Activated T-helper 2 cell treated with anti-CD3 and anti-CD28 coated beads, Interferon-gamma antibody, Interleukin-2, Interleukin-4, amounts not matched to agents 10 μg/mL and 5 μg/mL and 100 μg/mL, durations not matched to agents 14 hours and 24 hours and 36 hours (primary cell): ENCODE measurements at regions of chr3 and their contacts with region 1.

Region 1: GRCh38 chr3:180912304-180913296 is at the start of gene FXR1:
- DNase-seq: peak; percentile 79
- H3K4me3 Mint-ChIP-seq: peak within 1 kb of the TSS; percentile 99
- H3K27ac Mint-ChIP-seq: peak within 1 kb of the TSS; percentile 95
- H3K4me1 Mint-ChIP-seq: peaks cover 31% of the 10 kb centered on the region
- H3K27me3 Mint-ChIP-seq: no peaks in the 10 kb centered on the region
- total RNA-seq, gene FXR1: 163 and 170 TPM in 2 replicates

Region 2: GRCh38 chr3:180590396-180590795 is 322.2 kb before region 1 on chr3:
- intact Hi-C with region 1: no loop called
- DNase-seq: no peak
- H3K4me3 Mint-ChIP-seq: no peak overlapping the region
- H3K27ac Mint-ChIP-seq: no peak overlapping the region
- H3K4me1 Mint-ChIP-seq: peaks cover 1% of the 10 kb centered on the region
- H3K27me3 Mint-ChIP-seq: peaks cover 18% of the 10 kb centered on the region

Region 3: DNA sequence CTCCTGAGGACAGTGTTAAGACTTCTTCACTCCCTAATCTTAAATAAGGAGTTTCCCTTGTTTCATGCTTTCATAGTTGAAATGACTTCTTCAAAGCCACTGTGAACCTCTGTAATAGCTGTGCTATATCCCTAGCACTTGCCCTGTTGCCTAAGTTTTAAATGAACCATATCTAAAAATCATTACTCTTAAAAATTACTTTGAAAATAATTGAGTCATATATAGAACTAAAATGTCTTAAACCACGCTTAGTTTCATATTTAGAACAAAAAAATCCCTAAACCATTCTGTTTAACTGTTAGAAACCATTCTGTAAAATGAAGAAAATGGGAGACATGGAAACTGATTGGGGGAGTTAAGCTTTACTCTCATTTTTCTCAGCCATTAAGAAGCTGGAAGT is 47.1 kb after region 1 on chr3:
- intact Hi-C with region 1: loop called (anchors 5 kb)
- DNase-seq: no peak
- H3K4me3 Mint-ChIP-seq: no peak overlapping the region
- H3K27ac Mint-ChIP-seq: peak overlapping the region; percentile 64
- H3K4me1 Mint-ChIP-seq: peaks cover 10% of the 10 kb centered on the region
- H3K27me3 Mint-ChIP-seq: no peaks in the 10 kb centered on the region

Region 4: DNA sequence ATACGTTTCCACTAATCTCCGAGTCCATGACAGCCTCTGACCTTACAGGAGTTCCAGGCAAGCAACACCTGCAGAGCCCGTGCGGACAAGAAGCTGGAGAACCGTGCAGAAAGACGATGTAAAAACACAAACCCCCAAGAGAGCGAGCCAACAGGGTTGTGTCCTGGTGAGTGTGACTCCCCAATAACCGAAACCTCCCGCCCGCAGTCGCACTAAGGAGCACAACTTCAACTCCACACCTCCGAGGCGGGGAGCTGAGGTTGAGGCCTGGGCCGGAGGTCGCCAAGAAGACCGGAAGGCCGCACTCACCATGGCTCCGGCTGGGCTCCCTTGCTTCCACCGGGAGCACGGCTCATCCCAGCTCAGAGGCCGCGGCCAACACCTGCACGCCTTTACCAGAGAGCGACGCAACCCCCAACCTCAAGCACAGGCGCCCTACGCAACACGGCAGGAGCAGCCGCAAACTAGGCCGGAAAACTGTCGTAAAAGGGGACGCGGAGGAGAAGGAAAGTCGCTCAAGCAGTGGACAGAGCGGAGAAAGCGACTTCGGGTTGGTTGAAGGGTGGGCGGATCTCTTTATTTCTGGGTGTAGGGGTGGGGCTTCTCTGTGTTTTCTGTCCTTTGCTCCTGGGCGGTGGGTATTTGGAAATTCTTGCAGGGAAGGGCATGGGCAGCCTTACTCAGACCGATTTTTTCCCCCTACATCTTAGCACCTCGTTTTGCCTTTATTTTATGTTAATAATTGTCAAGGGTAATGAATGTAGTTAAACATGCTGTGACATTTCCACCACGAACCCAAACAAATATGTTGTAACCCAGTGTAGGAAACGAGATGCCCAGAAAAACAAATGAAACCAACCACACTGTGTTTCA is 76.9 kb after region 1 on chr3 and contains the start of gene DNAJC19:
- intact Hi-C with region 1: loop called (anchors 1 kb)
- DNase-seq: peak; percentile 88
- H3K4me3 Mint-ChIP-seq: peak within 1 kb of the TSS; percentile 100
- H3K27ac Mint-ChIP-seq: peak within 1 kb of the TSS; percentile 96
- H3K4me1 Mint-ChIP-seq: peaks cover 14% of the 10 kb centered on the region
- H3K27me3 Mint-ChIP-seq: peaks cover 9% of the 10 kb centered on the region
- total RNA-seq, gene DNAJC19: 48.5 and 62.2 TPM in 2 replicates